H1 (cell line): ENCODE measurements at regions of chr10 and their contacts with region 1.

Region 1: DNA sequence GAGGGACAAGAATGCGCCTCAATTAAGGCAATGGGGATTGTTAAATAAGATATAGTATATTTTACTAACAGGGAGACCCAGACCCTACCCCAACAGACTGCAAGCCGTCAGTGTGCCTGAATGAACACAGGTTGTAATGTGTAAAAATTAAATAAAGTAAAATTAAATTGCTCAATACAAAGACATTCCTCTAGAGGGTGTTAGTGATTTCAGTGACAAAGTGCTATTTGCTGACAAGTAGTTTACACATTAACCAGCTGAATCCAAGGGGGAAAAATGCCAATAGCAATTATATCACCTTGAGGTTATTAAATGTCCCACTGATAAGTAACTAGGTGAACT is 110.5 kb downstream of the EBF3 start:
- DNase-seq: no peak
- H3K4me3 ChIP-seq: no peak overlapping the region
- H3K27ac ChIP-seq: no peak overlapping the region
- H3K4me1 ChIP-seq: no peaks in the 10 kb centered on the region; a peak in 1 of 7 replicates
- H3K27me3 ChIP-seq: no peaks in the 10 kb centered on the region
- CTCF ChIP-seq: peak in 1 of 3 experiments; percentile 1; a peak in 1 of 4 replicates
- EP300 ChIP-seq: no peak
- POLR2A ChIP-seq: no peak
- RAD21 ChIP-seq: peak; percentile 21 to 34; a peak in 3 of 4 replicates

Region 2: DNA sequence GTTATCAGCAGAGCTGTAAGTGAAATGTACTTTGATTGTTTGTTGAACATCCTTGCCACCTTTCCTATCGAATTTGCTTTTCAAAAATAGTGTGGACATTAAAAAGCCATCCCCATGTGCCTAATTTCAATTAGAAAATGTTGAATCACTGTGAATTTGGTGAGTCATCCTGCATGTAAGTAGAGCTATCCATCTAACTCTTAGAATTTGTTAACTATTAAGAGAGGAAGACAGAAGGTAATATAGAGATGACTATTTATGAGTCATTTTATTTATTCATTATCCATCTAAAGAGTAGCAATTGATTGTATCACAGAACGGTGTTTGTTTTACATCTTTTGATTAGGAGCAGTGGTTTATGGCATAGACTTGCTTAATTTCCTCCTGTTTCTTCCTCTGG is 231.8 kb before region 1 on chr10:
- CTCF ChIA-PET with region 1: no interaction called
- POLR2A ChIA-PET with region 1: no interaction called
- DNase-seq: no peak
- H3K4me3 ChIP-seq: no peak overlapping the region
- H3K27ac ChIP-seq: no peak overlapping the region
- H3K4me1 ChIP-seq: peaks cover 0 to 8% (median 0%) of the 10 kb centered on the region in 4 experiments; a peak in 2 of 7 replicates
- H3K27me3 ChIP-seq: no peaks in the 10 kb centered on the region
- CTCF ChIP-seq: no peak
- EP300 ChIP-seq: no peak
- POLR2A ChIP-seq: no peak
- RAD21 ChIP-seq: no peak

Region 3: GRCh38 chr10:129833994-129834739 is 19.4 kb before region 1 on chr10:
- CTCF ChIA-PET with region 1: interaction called, 12 read pairs
- POLR2A ChIA-PET with region 1: no interaction called
- DNase-seq: no peak
- H3K4me3 ChIP-seq: no peak overlapping the region
- H3K27ac ChIP-seq: no peak overlapping the region
- H3K4me1 ChIP-seq: no peaks in the 10 kb centered on the region
- H3K27me3 ChIP-seq: no peaks in the 10 kb centered on the region
- CTCF ChIP-seq: no peak
- EP300 ChIP-seq: no peak
- POLR2A ChIP-seq: no peak
- RAD21 ChIP-seq: no peak

Region 4: GRCh38 chr10:129870961-129871621 is 17.6 kb after region 1 on chr10:
- CTCF ChIA-PET with region 1: interaction called, 24 read pairs
- POLR2A ChIA-PET with region 1: no interaction called
- DNase-seq: no peak
- H3K4me3 ChIP-seq: no peak overlapping the region
- H3K27ac ChIP-seq: no peak overlapping the region
- H3K4me1 ChIP-seq: peaks cover 7 to 36% (median 13%) of the 10 kb centered on the region in 4 experiments
- H3K27me3 ChIP-seq: no peaks in the 10 kb centered on the region
- CTCF ChIP-seq: no peak
- EP300 ChIP-seq: no peak
- POLR2A ChIP-seq: no peak
- RAD21 ChIP-seq: no peak

Region 5: GRCh38 chr10:129877773-129878371 is 24.3 kb after region 1 on chr10:
- CTCF ChIA-PET with region 1: interaction called, 20 read pairs
- POLR2A ChIA-PET with region 1: no interaction called
- DNase-seq: peak in 1 of 2 experiments; percentile 76
- H3K4me3 ChIP-seq: no peak overlapping the region
- H3K27ac ChIP-seq: no peak overlapping the region
- H3K4me1 ChIP-seq: peaks cover 0 to 2% (median 0%) of the 10 kb centered on the region in 4 experiments; a peak in 1 of 7 replicates
- H3K27me3 ChIP-seq: no peaks in the 10 kb centered on the region
- CTCF ChIP-seq: peak; percentile 63 to 80 (median 74)
- EP300 ChIP-seq: no peak
- POLR2A ChIP-seq: no peak
- RAD21 ChIP-seq: peak; percentile 60 to 62

Region 6: DNA sequence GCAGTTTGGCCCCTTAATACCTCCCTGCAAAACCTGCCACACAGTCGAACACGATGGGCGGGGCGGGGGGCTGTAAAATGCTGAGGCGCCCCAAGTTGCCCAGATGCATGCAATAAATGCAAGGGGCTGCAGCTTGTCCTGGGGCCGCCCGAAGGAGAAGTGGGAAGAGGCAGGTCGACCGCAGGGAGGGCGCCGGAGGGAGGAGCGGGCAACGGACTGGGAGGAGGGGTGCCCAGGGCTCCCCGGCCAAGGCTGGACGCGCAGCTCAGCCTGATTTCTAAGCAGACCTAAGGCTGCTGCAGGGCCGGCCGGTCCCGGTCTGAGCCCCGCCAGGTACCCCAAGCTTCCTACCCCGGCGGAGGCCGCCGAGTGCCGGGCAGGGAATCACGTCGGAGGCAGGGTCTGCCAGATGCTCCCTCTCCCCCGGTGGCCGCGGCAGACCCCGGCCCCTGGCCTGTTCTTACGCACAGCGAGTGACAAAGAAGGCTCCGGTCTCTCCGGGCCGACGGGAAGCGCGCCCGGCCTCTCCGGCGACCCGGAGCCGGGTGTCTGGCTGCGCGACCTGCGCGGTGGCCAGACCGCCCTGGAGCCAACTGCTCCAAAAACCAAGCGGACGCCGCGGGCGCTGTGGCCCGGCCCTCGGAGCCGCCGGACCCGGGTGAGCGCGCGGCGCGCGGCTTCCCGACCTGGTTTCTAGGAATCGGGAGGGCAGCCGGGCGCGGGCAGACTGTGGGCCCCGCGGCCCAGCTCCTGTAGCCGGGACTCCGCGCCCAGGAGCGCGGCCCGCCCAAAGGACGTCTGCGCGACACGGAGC is 111.3 kb after region 1 on chr10:
- CTCF ChIA-PET with region 1: no interaction called
- POLR2A ChIA-PET with region 1: no interaction called
- DNase-seq: peak in 1 of 2 experiments; percentile 77
- H3K4me3 ChIP-seq: peak overlapping the region; percentile 12 to 58 (median 32); a peak in 7 of 8 replicates
- H3K27ac ChIP-seq: no peak overlapping the region
- H3K4me1 ChIP-seq: peaks cover 9 to 29% (median 19%) of the 10 kb centered on the region in 4 experiments
- H3K27me3 ChIP-seq: peaks cover 87 to 98% (median 94%) of the 10 kb centered on the region in 4 experiments
- CTCF ChIP-seq: no peak
- EP300 ChIP-seq: no peak
- POLR2A ChIP-seq: no peak
- RAD21 ChIP-seq: no peak